HepG2 (cell line): ENCODE measurements at regions of chr7 and their contacts with region 1.

Region 1: GRCh38 chr7:636396-636795 is 90.1 kb upstream of the DNAAF5 start:
- DNase-seq: peak; percentile 12
- ATAC-seq: peak; percentile 77
- H3K4me3 ChIP-seq: no peak overlapping the region
- H3K27ac ChIP-seq: no peak overlapping the region
- H3K4me1 ChIP-seq: no peaks in the 10 kb centered on the region
- H3K27me3 ChIP-seq: no peaks in the 10 kb centered on the region
- CTCF ChIP-seq: peak; percentile 81
- EP300 ChIP-seq: no peak
- POLR2A ChIP-seq: no peak
- RAD21 ChIP-seq: peak; percentile 75

Region 2: DNA sequence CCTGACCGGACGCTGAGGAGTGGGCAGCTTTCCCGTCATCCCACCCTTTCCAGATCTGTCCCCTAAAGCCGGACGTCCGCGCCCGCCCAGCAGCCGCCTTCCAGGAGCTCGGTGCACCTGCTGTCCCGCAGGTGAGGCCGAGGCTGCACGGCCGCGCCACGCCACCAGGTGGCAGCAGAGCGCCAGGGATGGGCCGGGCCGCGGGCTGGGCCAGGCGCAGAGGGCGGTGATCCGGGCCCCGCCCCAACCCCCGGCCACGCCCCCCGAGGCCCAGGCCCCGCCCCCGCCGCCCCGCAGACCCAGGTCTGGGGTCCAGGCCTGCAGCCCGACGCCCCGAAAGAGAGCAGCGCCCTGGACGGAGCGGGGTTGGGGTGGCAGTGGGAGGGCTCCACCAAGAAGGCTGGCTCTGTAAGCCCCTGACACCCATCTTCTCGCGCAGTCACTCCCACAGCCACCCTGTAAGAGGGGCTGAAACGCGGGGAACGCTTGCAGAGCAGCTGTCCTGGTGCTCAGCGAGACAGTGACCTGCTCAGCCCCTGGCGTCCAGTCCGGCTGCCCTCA is 314.2 kb before region 1 on chr7:
- CTCF ChIA-PET with region 1: no interaction called
- POLR2A ChIA-PET with region 1: no interaction called
- in situ Hi-C with region 1: loop called (anchors 10 kb)
- intact Hi-C with region 1: no loop called
- DNase-seq: no peak
- ATAC-seq: peak; percentile 65
- H3K4me3 ChIP-seq: peak overlapping the region in 1 of 3 experiments; percentile 12; a peak in 1 of 6 replicates
- H3K27ac ChIP-seq: no peak overlapping the region
- H3K4me1 ChIP-seq: peaks cover 74% of the 10 kb centered on the region
- H3K27me3 ChIP-seq: peaks cover 3 to 58% of the 10 kb centered on the region in 2 experiments; a peak in 4 of 5 replicates
- CTCF ChIP-seq: peak; percentile 88
- EP300 ChIP-seq: no peak
- POLR2A ChIP-seq: no peak
- RAD21 ChIP-seq: peak; percentile 94